Heart right ventricle (tissue), 16 donors: ENCODE measurements at regions of chr14 and their contacts with region 1.

Region 1: DNA sequence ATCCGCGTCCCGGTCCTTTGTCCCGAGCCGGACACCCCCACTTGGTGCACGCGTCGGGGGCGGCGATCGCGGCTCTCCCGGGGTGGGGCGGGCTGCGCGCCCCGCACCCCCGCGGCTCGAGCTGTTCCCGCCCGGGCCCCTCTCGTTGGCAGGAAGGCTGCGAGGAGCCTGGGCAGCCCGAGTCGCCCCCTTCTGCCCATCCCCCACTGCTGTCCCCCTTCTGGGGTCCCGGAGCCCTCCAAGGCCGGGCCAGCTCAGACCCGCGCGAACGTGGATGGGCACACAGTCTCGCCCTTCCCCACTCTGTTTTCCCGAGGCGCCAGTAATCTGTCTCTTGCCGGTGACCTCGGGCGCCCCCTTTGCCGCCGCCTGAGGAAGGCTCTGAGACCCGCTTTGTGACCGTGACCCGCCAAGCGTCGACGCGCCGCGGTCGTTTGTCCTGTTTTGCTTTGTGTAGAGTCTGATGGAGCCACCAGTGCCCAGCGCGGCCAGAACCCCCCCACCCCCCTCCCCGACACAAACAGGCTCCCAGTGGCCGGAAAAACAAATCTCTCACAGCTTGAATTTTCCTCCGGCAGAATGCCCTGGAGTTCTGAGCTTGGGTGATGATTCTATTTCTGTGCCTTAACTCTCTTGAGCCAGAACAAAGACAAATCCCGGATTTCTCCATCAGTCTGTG is 610 bp downstream of the C14orf132 start:
- DNase-seq: peak in 1 of 2 donors; percentile 21
- ATAC-seq: peak; percentile 6 to 62 (median 27)
- H3K4me3 ChIP-seq: peak overlapping the region; percentile 48 to 80 (median 74)
- H3K27ac ChIP-seq: peak overlapping the region in 6 of 10 donors; percentile 27 to 75 (median 70)
- H3K4me1 ChIP-seq: peaks cover 3 to 34% (median 17%) of the 10 kb centered on the region in 9 donors
- H3K27me3 ChIP-seq: peaks cover 0 to 70% (median 25%) of the 10 kb centered on the region in 7 donors
- CTCF ChIP-seq: peak in 1 of 9 donors; percentile 9

Region 2: DNA sequence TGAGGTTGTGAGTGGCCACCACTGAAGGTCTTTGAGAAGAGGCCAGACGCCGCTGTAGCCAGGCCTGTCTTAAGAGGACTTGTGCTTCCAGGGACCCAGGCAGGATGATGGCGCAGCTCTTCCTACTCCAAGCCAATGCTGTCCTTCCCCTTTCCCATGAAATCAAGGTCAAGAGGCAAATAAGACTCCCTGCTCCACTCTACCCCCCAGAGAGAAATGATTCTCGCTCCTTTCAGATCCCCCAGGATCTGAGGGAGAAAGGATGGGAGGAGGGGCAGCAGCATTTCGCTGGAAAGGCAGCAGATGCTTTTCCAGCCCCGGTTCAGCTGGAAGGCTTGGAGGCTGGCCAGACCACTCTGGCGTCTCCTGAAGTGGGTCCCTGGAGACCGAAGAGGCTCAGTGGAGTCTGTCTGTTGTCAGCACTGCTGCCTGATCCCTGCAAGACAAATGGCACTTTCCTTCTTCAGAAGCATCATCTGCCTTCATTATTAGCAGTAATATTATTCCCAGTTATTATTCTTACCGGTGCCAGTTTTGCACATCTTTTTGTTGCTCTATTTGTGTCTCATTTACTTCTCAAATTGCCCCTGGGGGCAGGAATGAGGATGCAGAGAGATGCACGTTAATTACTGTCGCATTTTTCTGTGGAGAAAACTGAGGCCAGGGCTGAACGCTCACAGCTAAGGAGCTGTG is 50.8 kb after region 1 on chr14:
- intact Hi-C with region 1: loop called in 1 of 10 experiments (anchors 5 kb)
- DNase-seq: peak; percentile 83 to 84
- ATAC-seq: peak; percentile 59 to 89 (median 78)
- H3K4me3 ChIP-seq: no peak overlapping the region
- H3K27ac ChIP-seq: no peak overlapping the region
- H3K4me1 ChIP-seq: peaks cover 0 to 24% (median 19%) of the 10 kb centered on the region in 9 donors
- H3K27me3 ChIP-seq: peaks cover 0 to 23% (median 7%) of the 10 kb centered on the region in 7 donors
- CTCF ChIP-seq: no peak

Region 3: GRCh38 chr14:96176811-96177603 is 137.2 kb after region 1 on chr14:
- intact Hi-C with region 1: no loop called
- DNase-seq: peak; percentile 15 to 29
- ATAC-seq: peak in 7 of 8 donors; percentile 18 to 81 (median 47)
- H3K4me3 ChIP-seq: no peak overlapping the region
- H3K27ac ChIP-seq: peak overlapping the region in 1 of 10 donors; percentile 8
- H3K4me1 ChIP-seq: peaks cover 0 to 27% (median 17%) of the 10 kb centered on the region in 9 donors
- H3K27me3 ChIP-seq: peaks cover 0 to 37% (median 12%) of the 10 kb centered on the region in 7 donors
- CTCF ChIP-seq: no peak